Panc1 (cell line): ENCODE measurements at regions of chr22 and their contacts with region 1.

Region 1: DNA sequence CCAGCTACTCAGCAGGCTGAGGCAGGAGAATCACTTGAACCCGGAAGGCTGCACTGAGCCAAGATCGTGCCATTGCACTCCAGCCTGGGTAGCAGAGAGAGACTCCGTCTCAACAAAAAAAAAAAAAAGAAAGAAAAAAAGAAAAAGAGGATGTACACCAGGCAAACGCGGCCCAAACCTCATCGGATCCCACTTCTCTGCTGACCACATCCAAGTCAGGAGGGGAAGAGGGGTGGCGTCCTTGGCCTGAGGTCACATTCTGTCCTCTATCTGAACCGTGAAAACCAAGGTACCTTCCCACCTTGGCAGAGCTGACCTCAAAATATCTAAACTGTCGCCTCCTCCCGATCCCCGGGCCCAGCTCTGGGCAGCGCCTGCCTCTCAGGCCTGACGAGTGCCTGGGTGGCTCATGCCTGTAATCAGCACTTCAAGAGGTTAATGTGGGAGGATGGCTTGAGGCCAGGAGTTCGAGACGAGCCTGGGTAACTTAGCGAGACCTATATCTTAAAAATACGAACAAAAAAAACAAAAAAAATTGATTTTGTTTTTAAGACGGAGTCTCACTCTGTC is 25.1 kb downstream of the RGL4 start:
- DNase-seq: no peak
- ATAC-seq: no peak
- H3K4me3 ChIP-seq: peak overlapping the region; percentile 65 to 79
- H3K27ac ChIP-seq: no peak overlapping the region
- H3K4me1 ChIP-seq: no peaks in the 10 kb centered on the region
- H3K27me3 ChIP-seq: no peaks in the 10 kb centered on the region
- CTCF ChIP-seq: no peak

Region 2: DNA sequence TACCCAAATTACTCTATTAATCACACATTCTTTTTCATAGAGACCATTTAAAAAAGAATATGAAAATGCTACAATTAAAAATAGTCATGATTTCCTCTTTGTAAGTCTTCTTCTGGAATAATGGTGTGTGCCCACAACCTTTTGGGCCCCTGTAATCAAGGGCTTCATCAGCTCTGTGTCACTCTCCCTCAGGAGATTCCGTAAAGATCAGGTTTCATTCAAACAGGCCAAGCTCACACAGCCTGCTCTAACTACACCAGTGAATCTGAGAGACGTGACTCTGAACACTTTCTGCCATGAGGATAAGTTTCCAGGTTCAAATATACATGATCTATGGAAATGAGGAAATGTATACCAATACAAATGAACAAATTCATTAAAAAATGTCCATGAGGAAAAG is 93.3 kb before region 1 on chr22:
- CTCF ChIA-PET with region 1: no interaction called
- POLR2A ChIA-PET with region 1: no interaction called
- in situ Hi-C with region 1: no loop called
- intact Hi-C with region 1: no loop called
- DNase-seq: no peak
- ATAC-seq: no peak
- H3K4me3 ChIP-seq: no peak overlapping the region
- H3K27ac ChIP-seq: no peak overlapping the region
- H3K4me1 ChIP-seq: no peaks in the 10 kb centered on the region
- H3K27me3 ChIP-seq: no peaks in the 10 kb centered on the region
- CTCF ChIP-seq: no peak

Region 3: DNA sequence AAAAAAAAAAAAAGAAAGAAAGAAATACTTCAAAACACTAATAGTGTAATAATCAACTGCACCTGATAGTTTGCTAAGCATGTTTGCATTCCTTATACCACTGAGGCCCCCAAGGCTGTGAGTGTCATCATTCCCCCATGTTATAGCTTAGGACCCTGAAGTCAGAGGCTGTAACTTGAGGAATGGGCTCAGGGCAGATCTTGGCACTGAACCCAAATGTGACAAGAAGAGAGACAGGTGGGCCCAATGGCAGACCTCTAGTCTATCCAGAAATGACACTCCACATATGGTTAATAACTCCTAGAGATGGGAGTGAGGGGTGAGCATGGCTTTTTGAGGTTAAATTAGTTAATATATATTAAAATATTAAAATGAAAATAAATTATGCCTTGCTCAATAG is 21.8 kb after region 1 on chr22:
- CTCF ChIA-PET with region 1: no interaction called
- POLR2A ChIA-PET with region 1: interaction called, 16 read pairs
- in situ Hi-C with region 1: no loop called
- intact Hi-C with region 1: no loop called
- DNase-seq: no peak
- ATAC-seq: no peak
- H3K4me3 ChIP-seq: no peak overlapping the region
- H3K27ac ChIP-seq: no peak overlapping the region
- H3K4me1 ChIP-seq: no peaks in the 10 kb centered on the region
- H3K27me3 ChIP-seq: no peaks in the 10 kb centered on the region
- CTCF ChIP-seq: no peak

Region 4: GRCh38 chr22:23767673-23768548 is 52.0 kb after region 1 on chr22 and contains the start of gene CHCHD10:
- CTCF ChIA-PET with region 1: no interaction called
- POLR2A ChIA-PET with region 1: no interaction called
- in situ Hi-C with region 1: no loop called
- intact Hi-C with region 1: no loop called
- DNase-seq: peak; percentile 18
- ATAC-seq: peak; percentile 86
- H3K4me3 ChIP-seq: peak within 1 kb of the TSS; percentile 60 to 65
- H3K27ac ChIP-seq: peak within 1 kb of the TSS; percentile 75
- H3K4me1 ChIP-seq: 0 out of 2 replicates have a peak, but pooled peaks cover 5% of the 10 kb centered on the region
- H3K27me3 ChIP-seq: no peaks in the 10 kb centered on the region
- CTCF ChIP-seq: peak; percentile 85
- total RNA-seq, gene CHCHD10: 84.4 TPM